ENCODE measurements at regions of chr2 and their contacts with region 1.

Region 1: GRCh38 chr2:29014811-29015421 is 33.8 kb downstream of the TOGARAM2 start:
- DNase-seq: peak; percentile 93
- ATAC-seq: peak; percentile 71
- H3K4me3 Mint-ChIP-seq: peak overlapping the region; percentile 90
- H3K27ac Mint-ChIP-seq: peak overlapping the region; percentile 92
- H3K4me1 Mint-ChIP-seq: peaks cover 75% of the 10 kb centered on the region
- H3K27me3 Mint-ChIP-seq: no peaks in the 10 kb centered on the region

Region 2: DNA sequence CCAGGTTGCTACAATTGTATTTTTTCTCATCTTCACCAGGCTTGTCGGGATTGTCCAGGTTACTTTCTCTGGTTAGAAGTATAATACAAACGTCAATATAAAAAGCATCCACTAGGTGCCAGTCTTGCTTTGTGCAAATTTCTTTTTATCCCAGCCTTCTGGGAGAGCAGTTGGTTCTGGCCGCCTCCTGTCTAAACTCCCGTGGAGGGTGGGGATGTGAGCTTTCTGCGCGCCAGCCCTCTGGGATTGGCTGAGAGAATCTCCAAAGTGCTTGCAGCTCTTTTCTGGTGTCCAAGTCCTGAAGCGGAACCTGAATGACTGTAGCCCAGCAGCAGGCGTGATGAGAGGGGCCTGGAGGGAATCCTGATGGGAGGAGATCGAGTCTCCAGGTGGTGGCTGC is 56.2 kb before region 1 on chr2:
- CTCF ChIA-PET with region 1: interaction called, 94 read pairs
- DNase-seq: peak; percentile 62
- ATAC-seq: peak; percentile 73
- H3K4me3 Mint-ChIP-seq: no peak overlapping the region
- H3K27ac Mint-ChIP-seq: no peak overlapping the region
- H3K4me1 Mint-ChIP-seq: peaks cover 19% of the 10 kb centered on the region
- H3K27me3 Mint-ChIP-seq: no peaks in the 10 kb centered on the region

Region 3: GRCh38 chr2:29000481-29000880 is 14.4 kb before region 1 on chr2:
- CTCF ChIA-PET with region 1: interaction called, 94 read pairs
- DNase-seq: peak; percentile 74
- ATAC-seq: peak; percentile 90
- H3K4me3 Mint-ChIP-seq: no peak overlapping the region
- H3K27ac Mint-ChIP-seq: peak overlapping the region; percentile 38
- H3K4me1 Mint-ChIP-seq: peaks cover 24% of the 10 kb centered on the region
- H3K27me3 Mint-ChIP-seq: no peaks in the 10 kb centered on the region

Region 4: DNA sequence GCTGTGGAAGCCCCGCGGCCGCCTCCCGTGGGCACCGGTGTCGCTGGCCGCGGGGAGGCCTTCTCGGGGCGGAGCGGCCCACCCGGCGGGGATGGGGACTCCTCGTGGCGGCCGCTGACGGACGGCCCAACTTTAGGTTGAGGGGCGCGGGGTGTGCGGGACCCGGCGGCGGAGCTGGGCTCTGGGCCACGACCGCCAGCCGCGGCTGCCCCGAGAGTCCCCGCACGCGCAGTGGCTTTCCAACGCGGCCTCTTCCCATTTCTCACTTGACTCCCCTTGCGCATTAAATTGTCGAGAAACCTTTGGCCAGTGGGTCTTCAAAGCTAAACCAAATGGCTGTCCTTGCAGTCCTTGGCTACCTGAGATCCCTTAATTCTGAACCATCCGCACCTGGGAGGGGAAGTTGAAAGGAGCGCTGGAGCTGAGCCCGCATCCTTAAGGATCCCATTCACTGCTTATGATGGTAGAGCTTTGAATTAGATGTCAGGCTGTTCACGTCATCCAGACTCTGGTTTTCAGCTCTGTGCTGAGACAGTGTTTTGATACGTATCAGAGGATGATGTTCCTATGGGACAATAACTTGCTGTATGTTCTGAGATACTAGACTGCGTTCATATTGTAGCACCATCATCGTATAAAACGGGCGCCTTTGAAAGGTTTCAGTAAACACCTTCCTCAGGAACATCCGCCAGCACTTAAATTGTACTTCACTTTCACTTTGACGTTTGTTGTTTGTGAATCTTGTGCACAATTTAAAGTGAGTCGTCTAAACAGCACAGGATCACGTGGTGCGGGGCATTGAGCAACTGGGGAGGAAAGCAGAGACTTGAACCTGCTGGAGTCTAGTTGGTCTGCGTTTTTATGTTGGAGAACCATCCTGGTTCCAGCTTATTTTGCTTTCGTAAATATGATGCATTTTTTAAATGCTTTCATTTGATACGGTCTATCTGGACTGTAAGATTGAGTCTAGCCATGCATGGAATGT is 101.2 kb after region 1 on chr2:
- CTCF ChIA-PET with region 1: interaction called, 14 read pairs
- DNase-seq: peak; percentile 93
- ATAC-seq: peak; percentile 70
- H3K4me3 Mint-ChIP-seq: peak overlapping the region; percentile 80
- H3K27ac Mint-ChIP-seq: peak overlapping the region; percentile 97
- H3K4me1 Mint-ChIP-seq: peaks cover 50% of the 10 kb centered on the region
- H3K27me3 Mint-ChIP-seq: peaks cover 4% of the 10 kb centered on the region

Region 5: GRCh38 chr2:29196792-29197788 is 182.2 kb after region 1 on chr2:
- CTCF ChIA-PET with region 1: interaction called, 10 read pairs
- DNase-seq: peak; percentile 87
- ATAC-seq: peak; percentile 97
- H3K4me3 Mint-ChIP-seq: no peak overlapping the region
- H3K27ac Mint-ChIP-seq: no peak overlapping the region
- H3K4me1 Mint-ChIP-seq: peaks cover 1% of the 10 kb centered on the region
- H3K27me3 Mint-ChIP-seq: no peaks in the 10 kb centered on the region

Measured in activated CD8-positive, alpha-beta memory T cell treated with anti-CD3 and anti-CD28 coated beads, Interleukin-2, amount 10 ng/mL, durations not matched to agents 7 days and 5 days (primary cell).